K562 (cell line): ENCODE measurements at regions of chr3 and their contacts with region 1.

Region 1: DNA sequence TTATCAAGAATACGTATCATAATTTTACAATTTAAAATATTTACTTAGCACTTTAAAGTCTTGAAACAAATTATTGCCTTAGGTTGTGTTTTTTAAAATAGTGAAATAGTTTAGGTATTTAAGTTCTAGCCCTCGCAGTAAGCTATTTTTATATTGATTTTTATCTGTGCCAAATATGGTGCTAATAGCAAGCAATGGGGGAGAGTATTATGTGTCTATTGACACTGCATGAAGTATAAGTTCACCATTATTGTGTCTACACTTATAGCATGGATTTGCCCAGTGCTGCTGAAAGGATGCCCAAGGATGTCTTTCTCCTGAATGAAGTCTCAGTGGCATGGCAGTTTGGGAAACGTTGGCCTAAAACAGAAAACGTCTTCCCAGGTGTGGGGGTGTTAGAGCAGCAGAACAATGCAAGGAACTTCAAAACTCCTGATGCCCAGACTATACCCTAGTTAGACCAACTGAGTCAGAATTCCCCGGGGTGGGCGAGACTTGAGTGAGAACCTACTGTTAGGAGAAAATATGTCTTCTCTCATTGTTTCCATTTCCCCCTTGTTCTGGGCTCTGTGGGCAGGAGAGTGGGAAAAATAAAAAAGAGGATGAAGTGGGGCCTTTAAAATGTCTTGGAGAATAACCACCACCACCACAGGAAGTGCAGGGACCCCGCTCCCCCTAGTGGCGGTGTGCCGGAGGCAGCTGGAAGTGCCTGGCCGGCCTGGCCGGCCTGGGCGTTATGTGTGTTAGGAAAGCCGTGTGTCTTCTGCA is 104.2 kb upstream of the SLC7A14 start:
- DNase-seq: peak; percentile 81 to 90 (median 84)
- ATAC-seq: peak; percentile 100
- H3K4me3 ChIP-seq: no peak overlapping the region
- H3K27ac ChIP-seq: no peak overlapping the region
- H3K4me1 ChIP-seq: peaks cover 12 to 19% of the 10 kb centered on the region in 2 experiments
- H3K27me3 ChIP-seq: no peaks in the 10 kb centered on the region
- CTCF ChIP-seq: peak; percentile 88 to 95 (median 91)
- EP300 ChIP-seq: 0 out of 2 replicates have a peak, but pooled peaks have one; percentile 6
- POLR2A ChIP-seq: no peak
- RAD21 ChIP-seq: peak; percentile 92 to 94

Region 2: GRCh38 chr3:170419557-170420087 is 270.5 kb before region 1 on chr3:
- CTCF ChIA-PET with region 1: interaction called, 5 read pairs
- POLR2A ChIA-PET with region 1: no interaction called
- in situ Hi-C with region 1: loop called (anchors 10 kb)
- intact Hi-C with region 1: loop called (anchors 1 kb)
- DNase-seq: no peak
- ATAC-seq: no peak
- H3K4me3 ChIP-seq: no peak overlapping the region
- H3K27ac ChIP-seq: no peak overlapping the region
- H3K4me1 ChIP-seq: peaks cover 0 to 12% of the 10 kb centered on the region in 2 experiments; a peak in 2 of 5 replicates
- H3K27me3 ChIP-seq: no peaks in the 10 kb centered on the region
- CTCF ChIP-seq: no peak
- EP300 ChIP-seq: no peak
- POLR2A ChIP-seq: no peak
- RAD21 ChIP-seq: no peak

Region 3: DNA sequence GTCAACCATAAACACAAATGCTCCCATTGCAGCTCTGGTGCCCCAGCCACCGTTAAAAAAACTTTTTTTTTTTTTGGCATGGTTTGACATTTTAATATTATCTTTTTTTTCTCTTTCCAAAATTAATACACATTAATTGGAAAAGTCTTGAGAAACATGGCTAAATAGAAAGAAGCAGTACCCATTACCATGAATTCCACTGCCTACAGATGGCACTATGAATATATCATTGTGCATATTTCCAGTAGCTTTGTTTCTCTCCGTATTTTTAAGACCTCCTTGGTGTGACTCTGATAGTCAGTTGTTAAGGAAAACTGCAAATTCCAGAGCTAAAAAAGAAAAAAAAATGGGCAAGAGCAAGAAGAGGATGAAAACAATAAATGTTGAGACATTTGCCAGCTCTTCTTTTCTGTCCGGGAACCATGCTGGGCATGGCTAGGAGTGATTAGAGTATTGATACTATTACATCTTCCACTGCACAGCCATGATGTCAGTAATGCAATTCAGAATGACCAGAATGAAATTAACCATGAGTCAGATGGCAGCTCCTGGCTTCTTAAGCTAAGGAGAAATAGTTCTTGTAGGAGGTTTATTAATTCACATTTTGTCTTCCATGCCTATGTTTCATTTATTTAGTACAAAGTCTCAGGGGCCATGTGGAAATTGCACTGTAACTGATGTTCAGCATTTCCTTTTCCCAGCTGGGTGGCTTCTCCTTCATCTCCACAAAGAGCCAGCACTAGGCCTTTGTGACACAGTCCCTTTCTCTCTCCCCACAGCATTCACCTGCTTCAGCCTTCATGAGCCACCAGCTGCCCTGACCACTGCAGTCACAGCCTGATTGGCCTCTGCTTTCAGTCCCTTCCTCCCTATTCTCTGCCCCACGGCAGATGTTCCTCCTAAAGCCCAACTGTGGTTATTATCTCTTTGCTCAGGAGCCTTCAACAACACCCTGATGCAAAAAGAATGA is 136.0 kb before region 1 on chr3:
- CTCF ChIA-PET with region 1: no interaction called
- POLR2A ChIA-PET with region 1: no interaction called
- in situ Hi-C with region 1: no loop called
- intact Hi-C with region 1: loop called (anchors 10 kb)
- DNase-seq: no peak
- ATAC-seq: no peak
- H3K4me3 ChIP-seq: no peak overlapping the region
- H3K27ac ChIP-seq: no peak overlapping the region
- H3K4me1 ChIP-seq: no peaks in the 10 kb centered on the region
- H3K27me3 ChIP-seq: no peaks in the 10 kb centered on the region
- CTCF ChIP-seq: peak in 1 of 3 experiments; percentile 36; a peak in 2 of 6 replicates
- EP300 ChIP-seq: no peak
- POLR2A ChIP-seq: no peak
- RAD21 ChIP-seq: peak; percentile 33 to 40; a peak in 3 of 4 replicates

Region 4: GRCh38 chr3:170632780-170633179 is 57.3 kb before region 1 on chr3:
- CTCF ChIA-PET with region 1: no interaction called
- POLR2A ChIA-PET with region 1: no interaction called
- in situ Hi-C with region 1: no loop called
- intact Hi-C with region 1: loop called (anchors 5 kb)
- DNase-seq: peak in 1 of 4 experiments; percentile 0
- ATAC-seq: no peak
- H3K4me3 ChIP-seq: no peak overlapping the region
- H3K27ac ChIP-seq: no peak overlapping the region
- H3K4me1 ChIP-seq: peaks cover 5 to 8% of the 10 kb centered on the region in 2 experiments; a peak in 2 of 5 replicates
- H3K27me3 ChIP-seq: no peaks in the 10 kb centered on the region
- CTCF ChIP-seq: no peak
- EP300 ChIP-seq: no peak
- POLR2A ChIP-seq: no peak
- RAD21 ChIP-seq: no peak

Region 5: GRCh38 chr3:170778240-170779217 is 88.5 kb after region 1 on chr3:
- CTCF ChIA-PET with region 1: no interaction called
- POLR2A ChIA-PET with region 1: no interaction called
- in situ Hi-C with region 1: no loop called
- intact Hi-C with region 1: loop called (anchors 1 kb)
- DNase-seq: peak; percentile 30 to 93 (median 58)
- ATAC-seq: peak; percentile 86
- H3K4me3 ChIP-seq: no peak overlapping the region
- H3K27ac ChIP-seq: peak overlapping the region; percentile 70
- H3K4me1 ChIP-seq: peaks cover 12 to 61% of the 10 kb centered on the region in 2 experiments
- H3K27me3 ChIP-seq: no peaks in the 10 kb centered on the region
- CTCF ChIP-seq: no peak
- EP300 ChIP-seq: peak; percentile 99
- POLR2A ChIP-seq: no peak
- RAD21 ChIP-seq: peak in 1 of 2 experiments; percentile 40; a peak in 3 of 4 replicates